CD4-positive, alpha-beta memory T cell (primary cell): ENCODE measurements at regions of chr2 and their contacts with region 1.

Region 1: GRCh38 chr2:17719562-17720371 is 33.8 kb downstream of the SMC6 start:
- DNase-seq: peak in 4 of 5 donors; percentile 13 to 15 (median 15)
- H3K4me3 ChIP-seq: no peak overlapping the region
- H3K4me3 Mint-ChIP-seq: no peak overlapping the region
- H3K27ac ChIP-seq: no peak overlapping the region
- H3K27ac Mint-ChIP-seq: peak overlapping the region in 4 of 7 donors; percentile 3 to 35 (median 14)
- H3K4me1 ChIP-seq: no peaks in the 10 kb centered on the region
- H3K4me1 Mint-ChIP-seq: peaks cover 0 to 1% (median 0%) of the 10 kb centered on the region in 4 donors
- H3K27me3 ChIP-seq: no peaks in the 10 kb centered on the region
- H3K27me3 Mint-ChIP-seq: no peaks in the 10 kb centered on the region

Region 2: DNA sequence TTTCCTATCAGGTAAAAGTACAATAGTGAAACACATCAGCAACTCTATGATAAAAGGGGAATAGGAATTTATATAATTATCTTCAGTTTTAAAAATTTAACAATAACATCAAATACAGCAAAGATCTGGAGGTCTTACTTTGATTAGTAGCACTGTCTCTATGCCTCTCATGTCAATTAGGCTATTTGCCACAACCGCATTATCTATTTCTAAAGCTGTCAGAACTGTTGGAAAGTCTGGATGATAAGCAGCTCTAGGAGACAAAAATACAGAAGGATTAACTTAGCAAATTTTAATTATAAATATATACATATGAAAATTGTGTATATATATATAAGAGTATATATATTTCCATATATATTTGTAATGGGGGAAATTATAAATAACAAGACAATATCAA is 11.3 kb before region 1 on chr2:
- CTCF ChIA-PET with region 1: interaction called, 17 read pairs
- POLR2A ChIA-PET with region 1: no interaction called
- intact Hi-C with region 1: no loop called
- DNase-seq: no peak
- H3K4me3 ChIP-seq: no peak overlapping the region
- H3K4me3 Mint-ChIP-seq: no peak overlapping the region
- H3K27ac ChIP-seq: no peak overlapping the region
- H3K27ac Mint-ChIP-seq: no peak overlapping the region
- H3K4me1 ChIP-seq: no peaks in the 10 kb centered on the region
- H3K4me1 Mint-ChIP-seq: peaks cover 0 to 1% (median 0%) of the 10 kb centered on the region in 4 donors
- H3K27me3 ChIP-seq: no peaks in the 10 kb centered on the region
- H3K27me3 Mint-ChIP-seq: no peaks in the 10 kb centered on the region

Region 3: DNA sequence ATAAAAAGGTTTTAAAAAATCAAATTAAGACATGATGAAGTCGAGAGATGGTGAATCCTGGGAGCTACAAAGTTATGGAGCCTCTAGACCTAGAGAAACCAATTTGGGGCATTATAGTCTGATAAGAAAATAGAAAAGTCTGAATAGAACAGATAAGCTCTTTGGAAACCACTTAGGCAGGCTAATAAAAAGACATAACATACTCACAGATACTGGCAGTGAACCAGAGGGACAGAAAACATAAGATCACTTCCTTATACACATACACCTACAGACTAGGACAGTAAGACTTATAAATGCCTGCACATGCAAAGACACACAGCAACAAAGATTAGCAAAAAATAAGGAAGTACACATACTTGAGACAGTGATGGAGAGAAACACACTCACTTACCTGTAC is 13.8 kb after region 1 on chr2:
- CTCF ChIA-PET with region 1: interaction called, 23 read pairs
- POLR2A ChIA-PET with region 1: no interaction called
- intact Hi-C with region 1: no loop called
- DNase-seq: no peak
- H3K4me3 ChIP-seq: no peak overlapping the region
- H3K4me3 Mint-ChIP-seq: no peak overlapping the region
- H3K27ac ChIP-seq: no peak overlapping the region
- H3K27ac Mint-ChIP-seq: peak overlapping the region in 1 of 7 donors; percentile 13
- H3K4me1 ChIP-seq: no peaks in the 10 kb centered on the region
- H3K4me1 Mint-ChIP-seq: peaks cover 0 to 4% (median 0%) of the 10 kb centered on the region in 4 donors
- H3K27me3 ChIP-seq: no peaks in the 10 kb centered on the region
- H3K27me3 Mint-ChIP-seq: no peaks in the 10 kb centered on the region

Region 4: DNA sequence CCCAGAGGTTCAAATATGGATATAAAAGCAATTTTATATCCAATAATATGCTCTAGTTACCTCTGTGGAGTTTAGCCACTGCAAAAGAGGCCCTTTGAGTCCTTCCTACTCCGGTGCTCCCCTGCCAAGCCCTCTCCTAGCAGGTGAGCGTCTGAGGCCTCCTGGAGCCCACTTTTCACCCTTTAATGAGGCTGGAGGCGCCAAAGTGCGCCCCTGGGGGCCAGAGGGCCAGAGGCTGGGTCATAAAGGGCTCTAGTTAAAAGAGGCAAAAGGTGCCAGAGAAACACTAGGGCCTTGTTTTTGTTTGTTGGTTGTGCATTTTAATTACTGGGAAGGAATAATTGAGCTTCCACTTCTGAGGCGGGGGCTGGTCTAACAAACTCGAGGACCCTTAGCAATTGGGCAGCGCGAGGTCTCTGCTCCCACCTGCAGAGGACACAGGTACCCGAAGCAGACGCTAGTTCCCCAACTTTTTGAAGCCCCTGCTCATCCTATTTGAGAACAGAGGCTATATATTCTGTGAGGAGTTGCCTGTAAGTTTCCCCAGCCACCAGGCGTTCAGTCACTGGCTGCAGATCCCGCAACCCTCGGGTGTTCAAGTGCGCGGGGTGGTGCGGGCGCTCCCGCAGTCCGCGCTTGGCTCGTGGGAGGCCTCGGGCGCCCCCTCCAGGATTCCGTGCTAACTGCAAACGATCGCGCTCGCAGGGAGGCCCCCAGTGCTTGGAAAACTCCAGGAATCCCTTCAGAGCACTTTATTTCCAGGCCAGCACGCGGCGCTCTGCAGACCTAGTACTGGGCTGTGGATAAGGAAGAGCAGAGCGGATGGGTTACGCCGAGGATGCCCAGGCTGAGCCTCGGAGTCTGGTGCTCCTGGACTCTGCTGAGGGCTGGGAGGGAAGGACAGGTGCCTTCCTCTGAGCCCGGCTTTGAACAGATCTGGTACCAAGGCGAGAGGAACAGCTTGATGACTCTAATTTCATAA is 110.6 kb after region 1 on chr2:
- CTCF ChIA-PET with region 1: interaction called, 6 read pairs
- POLR2A ChIA-PET with region 1: no interaction called
- intact Hi-C with region 1: loop called (anchors 10 kb)
- DNase-seq: peak in 2 of 5 donors; percentile 4 to 12
- H3K4me3 ChIP-seq: no peak overlapping the region
- H3K4me3 Mint-ChIP-seq: peak overlapping the region in 2 of 8 donors; percentile 4 to 43
- H3K27ac ChIP-seq: no peak overlapping the region
- H3K27ac Mint-ChIP-seq: no peak overlapping the region
- H3K4me1 ChIP-seq: no peaks in the 10 kb centered on the region
- H3K4me1 Mint-ChIP-seq: peaks cover 0 to 11% (median 2%) of the 10 kb centered on the region in 4 donors
- H3K27me3 ChIP-seq: peaks cover 9% of the 10 kb centered on the region
- H3K27me3 Mint-ChIP-seq: peaks cover 26 to 32% of the 10 kb centered on the region in 2 donors